ENCODE measurements at regions of chr12 and their contacts with region 1.

Region 1: GRCh38 chr12:60494244-60494643 is 898.4 kb downstream of the SLC16A7 start:
- DNase-seq: peak; percentile 66
- H3K4me3 ChIP-seq: no peak overlapping the region
- H3K27ac ChIP-seq: no peak overlapping the region
- H3K4me1 ChIP-seq: peaks cover 2% of the 10 kb centered on the region
- H3K27me3 ChIP-seq: no peaks in the 10 kb centered on the region
- CTCF ChIP-seq: peak; percentile 34 to 54
- POLR2A ChIP-seq: no peak

Region 2: DNA sequence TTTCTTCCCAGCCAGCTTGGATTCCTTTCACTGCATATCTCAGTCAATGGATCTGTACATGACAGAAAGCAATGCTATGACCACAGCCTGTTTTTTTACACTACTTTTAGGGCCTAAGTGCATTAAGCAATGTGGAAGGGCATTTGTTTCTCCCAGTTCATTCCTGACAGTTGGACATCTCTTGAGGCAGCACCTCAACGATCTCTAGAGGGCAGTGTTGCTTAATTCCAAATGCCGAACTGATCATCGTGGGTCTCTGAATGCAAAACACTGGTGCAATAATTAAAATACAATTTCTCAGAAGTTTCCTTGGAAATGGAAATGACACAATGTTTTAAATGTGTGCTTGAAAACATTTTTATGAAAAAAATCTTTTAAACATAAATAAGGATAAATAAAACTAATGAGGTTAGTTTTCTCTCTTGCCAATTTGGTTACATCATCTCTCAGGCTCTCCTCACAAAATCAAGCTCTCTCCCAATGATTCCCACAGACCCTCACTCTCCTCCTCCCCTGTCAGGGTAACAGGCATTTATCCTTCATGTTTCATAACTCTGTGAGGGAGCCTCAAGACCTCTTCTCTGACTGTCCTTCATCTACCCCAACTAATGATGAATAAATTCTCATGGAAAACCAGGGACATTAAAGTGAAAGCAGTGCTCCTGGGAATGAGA is 1090.8 kb before region 1 on chr12:
- CTCF ChIA-PET with region 1: interaction called, 21 read pairs
- POLR2A ChIA-PET with region 1: no interaction called
- dilution Hi-C with region 1: no loop called
- intact Hi-C with region 1: loop called (anchors 2 kb)
- DNase-seq: peak; percentile 70
- H3K4me3 ChIP-seq: peak overlapping the region in 1 of 3 experiments; percentile 20
- H3K27ac ChIP-seq: no peak overlapping the region
- H3K4me1 ChIP-seq: peaks cover 6% of the 10 kb centered on the region
- H3K27me3 ChIP-seq: no peaks in the 10 kb centered on the region
- CTCF ChIP-seq: peak; percentile 74 to 79
- POLR2A ChIP-seq: no peak

Region 3: GRCh38 chr12:59595883-59596540 is 898.2 kb before region 1 on chr12 and contains the start of gene SLC16A7:
- CTCF ChIA-PET with region 1: interaction called, 4 read pairs
- POLR2A ChIA-PET with region 1: no interaction called
- dilution Hi-C with region 1: no loop called
- intact Hi-C with region 1: loop called (anchors 2 kb)
- DNase-seq: peak; percentile 88
- H3K4me3 ChIP-seq: peak within 1 kb of the TSS; percentile 74 to 100 (median 99)
- H3K27ac ChIP-seq: peak within 1 kb of the TSS; percentile 81
- H3K4me1 ChIP-seq: peaks cover 12% of the 10 kb centered on the region
- H3K27me3 ChIP-seq: no peaks in the 10 kb centered on the region
- CTCF ChIP-seq: no peak
- POLR2A ChIP-seq: peak; percentile 51
- total RNA-seq, gene SLC16A7: 8.4 and 8.9 TPM in 2 replicates

Region 4: DNA sequence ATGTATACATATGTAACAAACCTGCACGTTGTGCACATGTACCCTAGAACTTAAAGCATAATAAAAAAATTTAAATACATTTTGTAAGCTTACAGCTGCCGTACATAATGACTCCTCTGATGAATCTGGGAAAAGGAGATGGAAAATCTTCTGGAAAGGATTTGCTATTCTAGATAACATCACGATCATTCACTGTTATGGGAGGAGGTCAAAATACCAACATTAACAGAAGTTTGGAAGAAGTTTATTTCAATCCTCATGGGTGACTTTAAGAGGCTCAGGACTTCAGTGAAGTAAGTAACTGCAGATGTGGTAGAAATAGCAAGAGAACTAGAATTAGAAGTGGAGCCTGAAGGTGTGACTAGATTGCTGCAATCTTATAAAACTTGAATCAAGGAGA is 726.2 kb before region 1 on chr12:
- CTCF ChIA-PET with region 1: no interaction called
- POLR2A ChIA-PET with region 1: no interaction called
- dilution Hi-C with region 1: no loop called
- intact Hi-C with region 1: no loop called
- DNase-seq: no peak
- H3K4me3 ChIP-seq: no peak overlapping the region
- H3K27ac ChIP-seq: no peak overlapping the region
- H3K4me1 ChIP-seq: no peaks in the 10 kb centered on the region
- H3K27me3 ChIP-seq: no peaks in the 10 kb centered on the region
- CTCF ChIP-seq: no peak
- POLR2A ChIP-seq: no peak

Region 5: DNA sequence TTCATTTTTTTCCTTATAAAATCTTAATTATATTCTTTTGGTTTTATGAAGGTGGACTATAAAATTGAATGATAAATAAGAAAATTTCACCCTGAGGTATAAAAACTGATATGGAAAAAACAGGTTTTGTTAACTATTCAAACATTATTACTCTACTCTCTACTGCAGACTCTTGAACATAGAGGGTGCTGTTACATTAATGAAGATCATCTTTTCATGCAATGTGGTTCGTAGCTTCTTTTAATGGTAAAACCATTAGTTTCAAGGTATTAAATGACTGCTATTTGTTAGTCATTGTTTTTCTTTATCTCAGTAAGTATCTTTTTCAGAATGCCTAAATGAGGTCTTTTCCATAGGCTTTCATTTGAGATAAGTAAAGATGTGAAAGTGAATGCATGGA is 388.0 kb before region 1 on chr12:
- CTCF ChIA-PET with region 1: interaction called, 45 read pairs
- POLR2A ChIA-PET with region 1: no interaction called
- dilution Hi-C with region 1: no loop called
- intact Hi-C with region 1: loop called (anchors 5 kb)
- DNase-seq: peak; percentile 41
- H3K4me3 ChIP-seq: no peak overlapping the region
- H3K27ac ChIP-seq: no peak overlapping the region
- H3K4me1 ChIP-seq: no peaks in the 10 kb centered on the region
- H3K27me3 ChIP-seq: no peaks in the 10 kb centered on the region
- CTCF ChIP-seq: peak in 1 of 2 donors; percentile 12
- POLR2A ChIP-seq: no peak

Region 6: DNA sequence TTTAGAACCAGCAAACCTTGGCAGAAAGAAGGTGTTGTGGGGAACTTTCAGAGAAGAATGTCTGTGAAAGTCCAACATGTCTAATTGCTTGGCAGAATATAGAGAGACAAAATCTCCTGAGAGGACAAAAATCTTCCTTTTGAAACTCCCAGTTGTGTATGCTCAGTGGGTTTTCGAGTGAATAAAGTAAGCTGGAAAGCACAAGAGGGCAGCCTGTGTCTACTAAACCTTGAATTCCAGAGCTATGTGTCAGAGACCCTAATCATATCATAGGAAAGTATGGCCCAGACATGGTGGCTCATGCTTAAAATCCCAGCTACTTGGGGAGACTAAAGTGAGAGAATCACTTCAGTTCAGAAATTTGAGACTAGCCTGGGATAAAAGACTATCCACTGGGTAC is 237.2 kb before region 1 on chr12:
- CTCF ChIA-PET with region 1: interaction called, 99 read pairs
- POLR2A ChIA-PET with region 1: no interaction called
- dilution Hi-C with region 1: no loop called
- intact Hi-C with region 1: loop called (anchors 1 kb)
- DNase-seq: peak; percentile 82
- H3K4me3 ChIP-seq: no peak overlapping the region
- H3K27ac ChIP-seq: no peak overlapping the region
- H3K4me1 ChIP-seq: no peaks in the 10 kb centered on the region
- H3K27me3 ChIP-seq: no peaks in the 10 kb centered on the region
- CTCF ChIP-seq: peak; percentile 14 to 33
- POLR2A ChIP-seq: no peak

Region 7: GRCh38 chr12:60437297-60437696 is 56.9 kb before region 1 on chr12:
- CTCF ChIA-PET with region 1: no interaction called
- POLR2A ChIA-PET with region 1: no interaction called
- dilution Hi-C with region 1: no loop called
- intact Hi-C with region 1: loop called (anchors 5 kb)
- DNase-seq: peak; percentile 89
- H3K4me3 ChIP-seq: no peak overlapping the region
- H3K27ac ChIP-seq: peak overlapping the region; percentile 84
- H3K4me1 ChIP-seq: peaks cover 11% of the 10 kb centered on the region
- H3K27me3 ChIP-seq: no peaks in the 10 kb centered on the region
- CTCF ChIP-seq: no peak
- POLR2A ChIP-seq: no peak

Region 8: DNA sequence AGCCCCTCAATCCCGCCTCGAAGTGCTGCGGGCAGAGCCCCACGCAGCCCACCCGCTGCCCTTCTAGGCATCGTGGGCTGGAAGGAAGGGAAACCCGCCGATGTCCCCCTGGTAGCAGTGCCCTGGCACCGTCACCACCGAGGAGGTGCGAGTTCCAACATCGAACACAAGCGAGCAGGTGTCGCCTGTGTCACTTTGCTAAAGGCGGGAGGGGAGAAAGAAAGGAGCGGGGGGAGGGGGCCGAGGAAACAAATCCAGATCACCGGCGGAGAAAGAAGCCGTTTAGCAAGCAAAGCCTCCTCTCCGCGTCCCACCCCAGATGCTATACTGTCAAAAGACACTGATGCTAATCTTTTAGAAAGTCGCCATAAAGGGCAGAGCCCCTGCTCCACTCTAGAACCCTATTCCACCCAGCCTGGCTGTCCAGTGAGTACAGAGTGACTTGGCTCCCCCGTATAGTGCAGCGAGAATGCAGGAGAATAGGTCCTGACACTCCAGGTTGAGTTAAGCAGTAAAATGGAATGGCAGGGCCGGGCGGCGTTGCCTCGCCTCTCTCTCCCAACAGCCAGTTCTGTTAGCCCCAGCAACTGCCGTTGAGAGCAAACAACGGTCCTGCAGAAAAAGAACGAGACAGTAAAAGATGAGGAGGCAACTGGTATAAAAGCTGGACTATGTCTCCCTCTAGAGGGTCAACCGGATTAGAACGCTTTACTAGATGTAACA is 1698.1 kb after region 1 on chr12:
- CTCF ChIA-PET with region 1: no interaction called
- POLR2A ChIA-PET with region 1: no interaction called
- dilution Hi-C with region 1: no loop called
- intact Hi-C with region 1: loop called (anchors 5 kb)
- DNase-seq: peak; percentile 85
- H3K4me3 ChIP-seq: peak overlapping the region in 2 of 3 experiments; percentile 22 to 37
- H3K27ac ChIP-seq: no peak overlapping the region
- H3K4me1 ChIP-seq: peaks cover 12% of the 10 kb centered on the region
- H3K27me3 ChIP-seq: peaks cover 33 to 65% of the 10 kb centered on the region in 2 experiments
- CTCF ChIP-seq: peak; percentile 46 to 64
- POLR2A ChIP-seq: no peak

Measured in endothelial cell of umbilical vein (primary cell).